CD8-positive, alpha-beta memory T cell (primary cell): ENCODE measurements at regions of chr10 and their contacts with region 1.

Region 1: DNA sequence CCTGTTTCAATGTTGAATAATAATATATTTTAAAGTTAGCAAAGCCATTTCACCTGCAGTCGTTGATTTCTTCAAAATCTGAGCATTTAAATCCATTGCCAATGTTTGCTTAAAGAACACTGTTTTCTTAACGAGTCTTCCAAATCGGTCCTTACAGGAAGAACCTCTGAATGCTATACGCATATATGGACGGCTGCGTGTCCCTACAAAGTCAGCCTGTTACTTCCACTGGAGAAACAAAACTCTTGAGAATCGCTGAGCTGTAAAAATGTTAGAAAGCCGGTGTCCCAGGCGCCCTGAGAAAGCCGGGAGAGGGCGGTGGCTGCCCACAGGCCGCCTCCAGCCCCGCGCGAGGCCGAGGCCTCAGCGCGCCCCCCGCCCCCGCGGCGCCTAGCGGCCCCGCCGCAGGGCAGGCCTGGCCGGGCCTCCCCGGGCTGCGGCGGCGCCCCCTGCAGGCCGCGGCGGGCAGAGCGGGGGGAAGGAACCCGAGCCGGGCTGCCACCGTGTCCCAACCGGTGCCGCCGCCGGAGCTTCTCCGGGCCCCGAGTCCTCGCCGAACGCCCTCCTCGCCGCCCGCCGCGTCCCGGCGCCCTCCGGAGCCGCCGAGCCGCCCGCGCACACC is at the start of gene FHIP2A:
- DNase-seq: peak; percentile 76 to 89 (median 83)
- H3K4me3 ChIP-seq: peak within 1 kb of the TSS; percentile 70
- H3K4me3 Mint-ChIP-seq: peak within 1 kb of the TSS; percentile 93 to 98 (median 97)
- H3K27ac ChIP-seq: peak within 1 kb of the TSS; percentile 51
- H3K27ac Mint-ChIP-seq: peak within 1 kb of the TSS; percentile 92 to 98 (median 96)
- H3K4me1 ChIP-seq: peaks cover 20% of the 10 kb centered on the region
- H3K4me1 Mint-ChIP-seq: peaks cover 39 to 57% (median 57%) of the 10 kb centered on the region in 3 donors
- H3K27me3 ChIP-seq: no peaks in the 10 kb centered on the region
- H3K27me3 Mint-ChIP-seq: peaks cover 0 to 1% of the 10 kb centered on the region in 2 donors
- total RNA-seq, gene FHIP2A: 20.0 to 23.2 TPM

Region 2: DNA sequence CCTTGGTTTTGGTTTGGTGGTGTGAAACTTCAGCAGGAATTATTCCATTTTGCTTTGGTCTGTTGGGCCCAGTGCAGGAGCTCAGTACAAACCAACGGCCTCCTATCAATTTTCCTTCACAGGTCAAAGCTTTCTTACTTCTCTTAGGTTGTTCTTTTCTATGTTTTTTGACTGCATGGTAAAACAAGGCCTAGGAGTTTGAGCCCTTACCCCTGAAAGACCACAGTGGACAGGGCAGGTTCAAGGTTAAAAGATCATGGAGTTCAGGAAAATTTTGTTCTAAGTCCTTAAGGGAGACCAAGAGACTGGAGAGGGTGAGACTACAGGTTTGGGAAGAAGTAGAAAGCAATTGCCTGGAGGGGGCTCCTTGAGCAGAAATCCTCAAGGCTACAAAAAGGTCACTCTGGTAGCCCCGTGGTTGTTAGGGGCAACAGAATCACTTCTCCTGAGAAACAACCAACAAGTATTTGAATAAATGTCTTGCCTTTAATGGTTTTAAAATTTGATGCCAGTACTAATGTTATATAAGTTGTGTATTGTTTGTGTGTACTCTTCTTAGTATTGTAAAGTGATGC is 40.7 kb before region 1 on chr10:
- CTCF ChIA-PET with region 1: interaction called, 15 read pairs
- POLR2A ChIA-PET with region 1: interaction called, 3 read pairs
- DNase-seq: no peak
- H3K4me3 ChIP-seq: no peak overlapping the region
- H3K4me3 Mint-ChIP-seq: no peak overlapping the region
- H3K27ac ChIP-seq: no peak overlapping the region
- H3K27ac Mint-ChIP-seq: peak overlapping the region in 1 of 8 donors; percentile 76
- H3K4me1 ChIP-seq: no peaks in the 10 kb centered on the region
- H3K4me1 Mint-ChIP-seq: no peaks in the 10 kb centered on the region
- H3K27me3 ChIP-seq: no peaks in the 10 kb centered on the region
- H3K27me3 Mint-ChIP-seq: no peaks in the 10 kb centered on the region

Region 3: GRCh38 chr10:114810926-114811325 is 10.5 kb before region 1 on chr10:
- CTCF ChIA-PET with region 1: interaction called, 31 read pairs
- POLR2A ChIA-PET with region 1: interaction called, 5 read pairs
- DNase-seq: no peak
- H3K4me3 ChIP-seq: no peak overlapping the region
- H3K4me3 Mint-ChIP-seq: peak overlapping the region in 3 of 7 donors; percentile 32 to 59 (median 58)
- H3K27ac ChIP-seq: no peak overlapping the region
- H3K27ac Mint-ChIP-seq: peak overlapping the region; percentile 51 to 91 (median 88)
- H3K4me1 ChIP-seq: peaks cover 13% of the 10 kb centered on the region
- H3K4me1 Mint-ChIP-seq: peaks cover 28 to 41% (median 41%) of the 10 kb centered on the region in 3 donors
- H3K27me3 ChIP-seq: no peaks in the 10 kb centered on the region
- H3K27me3 Mint-ChIP-seq: peaks cover 0 to 3% of the 10 kb centered on the region in 2 donors